Lower leg skin (tissue), 4 donors: ENCODE measurements at regions of chr5 and their contacts with region 1.

Region 1: DNA sequence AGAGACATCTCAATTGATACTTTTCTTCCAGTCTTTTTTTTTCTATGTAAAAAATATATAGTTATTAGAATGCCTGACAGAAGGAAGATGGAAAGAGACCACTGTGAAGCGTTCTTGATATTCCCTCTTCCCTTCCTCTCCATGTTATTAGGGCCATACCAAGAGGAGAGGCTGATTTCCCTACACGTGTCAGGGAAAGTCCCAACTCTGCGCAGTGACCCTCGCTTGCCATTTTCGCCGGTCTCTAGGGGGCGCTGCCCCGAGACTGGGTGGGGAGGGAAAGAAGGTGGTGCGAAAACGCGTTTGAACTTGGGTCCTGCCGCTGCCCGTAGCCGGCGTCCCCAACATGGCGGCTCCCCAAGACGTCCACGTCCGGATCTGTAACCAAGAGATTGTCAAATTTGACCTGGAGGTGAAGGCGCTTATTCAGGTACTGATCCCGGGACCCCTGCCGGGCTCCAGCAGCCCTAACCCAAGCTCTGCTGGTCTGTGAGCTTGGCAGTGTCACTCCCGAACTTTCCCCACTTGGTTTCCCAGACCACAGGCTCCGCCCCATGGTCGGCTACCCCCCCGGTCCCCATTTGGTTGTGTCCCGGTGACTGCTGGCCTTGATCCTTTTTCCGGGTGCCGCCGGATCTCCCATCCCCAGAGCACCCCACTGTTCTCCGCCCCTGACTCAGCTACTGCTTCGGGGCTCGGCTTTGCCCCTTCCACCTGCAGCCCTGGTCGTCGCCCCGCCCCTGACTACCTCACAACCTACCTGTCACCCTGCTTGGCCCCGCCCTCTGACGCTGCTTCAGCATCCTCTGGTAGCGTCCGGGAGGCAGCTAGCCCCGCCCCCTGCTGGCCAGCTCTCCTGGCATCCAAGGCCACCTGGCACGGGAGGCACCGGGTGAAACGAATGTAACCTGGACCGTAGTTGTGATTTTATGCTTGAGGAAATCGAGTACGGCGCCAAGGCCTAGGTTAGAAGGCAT is at the start of gene BNIP1:
- DNase-seq: peak; percentile 90 to 98
- H3K4me3 ChIP-seq: peak within 1 kb of the TSS; percentile 86
- CTCF ChIP-seq: peak in 1 of 3 donors; percentile 76
- POLR2A ChIP-seq: no peak
- total RNA-seq, gene BNIP1: 4.8 to 8.6 (median 5.5) TPM

Region 2: GRCh38 chr5:171310819-171311697 is 1833.4 kb before region 1 on chr5:
- intact Hi-C with region 1: no loop called
- DNase-seq: no peak
- H3K4me3 ChIP-seq: no peak overlapping the region
- CTCF ChIP-seq: no peak
- POLR2A ChIP-seq: no peak

Region 3: GRCh38 chr5:171571663-171572062 is 1572.8 kb before region 1 on chr5:
- intact Hi-C with region 1: no loop called
- DNase-seq: no peak
- H3K4me3 ChIP-seq: no peak overlapping the region
- CTCF ChIP-seq: no peak
- POLR2A ChIP-seq: no peak

Region 4: GRCh38 chr5:172984243-172984953 is 160.1 kb before region 1 on chr5:
- intact Hi-C with region 1: loop called (anchors 10 kb)
- DNase-seq: peak; percentile 81 to 94
- H3K4me3 ChIP-seq: peak overlapping the region; percentile 95
- CTCF ChIP-seq: no peak
- POLR2A ChIP-seq: no peak

Region 5: DNA sequence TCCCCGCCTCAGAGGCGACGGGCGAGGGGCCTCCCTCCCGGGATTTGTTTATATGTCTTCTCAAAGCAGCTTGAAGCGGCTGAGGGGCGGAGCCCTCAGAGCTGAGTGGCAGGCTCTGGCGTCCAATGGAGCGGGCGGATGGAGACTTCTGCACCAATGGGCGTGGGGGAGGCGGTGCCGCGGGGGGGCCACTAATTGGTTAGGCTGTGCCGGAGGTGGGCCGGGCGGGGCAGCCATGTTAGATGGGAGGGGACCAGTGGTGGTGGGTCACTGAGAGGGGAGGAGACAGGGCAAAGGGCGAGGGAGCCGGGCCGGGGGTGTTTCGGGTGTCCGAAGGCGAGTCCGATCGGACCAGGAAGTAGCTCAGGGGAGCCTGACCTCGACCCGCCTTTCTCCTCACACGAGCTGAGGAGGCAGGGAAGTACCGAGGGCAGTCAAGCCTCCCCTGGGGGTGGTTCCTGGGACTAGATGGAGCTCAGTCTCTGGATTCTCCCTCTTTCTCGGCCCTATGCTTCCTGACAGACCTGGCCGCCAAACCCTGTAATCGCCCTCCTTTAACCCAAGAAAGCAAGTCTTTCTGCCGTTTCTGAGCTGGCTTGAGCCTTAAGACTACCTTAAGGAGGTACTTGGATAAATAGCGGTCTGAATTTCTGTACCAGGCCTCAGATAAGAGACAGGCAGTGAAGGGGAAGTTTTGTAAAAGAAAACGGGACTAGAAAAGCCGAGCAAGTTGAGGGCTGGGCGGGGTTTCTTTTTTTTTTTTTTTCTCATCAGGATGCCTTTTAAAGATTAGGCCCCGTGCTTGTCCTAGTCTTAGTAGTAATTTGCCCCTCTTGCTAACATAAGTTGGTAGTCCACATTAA is 87.2 kb before region 1 on chr5:
- intact Hi-C with region 1: loop called (anchors 10 kb)
- DNase-seq: peak; percentile 99 to 100
- H3K4me3 ChIP-seq: peak overlapping the region; percentile 99
- CTCF ChIP-seq: no peak
- POLR2A ChIP-seq: no peak

Region 6: DNA sequence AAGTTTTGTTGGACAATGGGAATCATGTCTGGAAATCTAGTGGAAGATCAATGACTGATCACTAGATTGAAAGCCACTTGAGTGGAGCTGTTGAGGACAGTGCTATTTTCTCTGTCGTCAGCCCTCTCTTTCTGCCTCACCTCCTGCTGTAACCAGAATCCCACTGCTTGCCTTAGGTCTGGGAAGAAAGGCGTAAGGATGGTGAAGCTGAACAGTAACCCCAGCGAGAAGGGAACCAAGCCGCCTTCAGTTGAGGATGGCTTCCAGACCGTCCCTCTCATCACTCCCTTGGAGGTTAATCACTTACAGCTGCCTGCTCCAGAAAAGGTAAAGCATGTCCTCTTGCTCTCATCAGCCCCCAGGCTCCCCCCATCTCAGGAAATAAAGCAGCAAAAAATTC is 902.1 kb after region 1 on chr5:
- intact Hi-C with region 1: no loop called
- DNase-seq: no peak
- H3K4me3 ChIP-seq: no peak overlapping the region
- CTCF ChIP-seq: no peak
- POLR2A ChIP-seq: no peak

Region 7: DNA sequence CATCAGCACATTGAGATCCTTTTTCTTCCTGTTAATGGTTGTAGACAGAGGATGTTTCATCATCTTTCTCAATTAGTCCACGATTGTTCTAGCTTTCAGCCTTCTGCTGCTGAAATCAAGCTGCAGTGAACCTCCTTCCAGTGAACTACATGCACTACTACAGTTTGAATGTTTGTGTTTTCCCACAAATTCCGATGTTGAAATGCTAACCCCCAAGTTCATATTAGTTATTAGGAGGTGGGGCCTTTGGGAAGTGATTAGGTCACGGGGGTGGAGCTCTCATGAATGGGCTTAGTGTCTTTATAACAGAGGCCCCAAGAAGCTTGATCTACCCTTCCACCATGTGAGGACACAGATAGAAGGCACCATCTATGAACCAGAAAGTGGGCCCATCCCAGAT is 933.9 kb after region 1 on chr5:
- intact Hi-C with region 1: no loop called
- DNase-seq: no peak
- H3K4me3 ChIP-seq: no peak overlapping the region
- CTCF ChIP-seq: no peak
- POLR2A ChIP-seq: no peak